Astrocyte of the cerebellum (primary cell): ENCODE measurements at regions of chr7 and their contacts with region 1.

Region 1: DNA sequence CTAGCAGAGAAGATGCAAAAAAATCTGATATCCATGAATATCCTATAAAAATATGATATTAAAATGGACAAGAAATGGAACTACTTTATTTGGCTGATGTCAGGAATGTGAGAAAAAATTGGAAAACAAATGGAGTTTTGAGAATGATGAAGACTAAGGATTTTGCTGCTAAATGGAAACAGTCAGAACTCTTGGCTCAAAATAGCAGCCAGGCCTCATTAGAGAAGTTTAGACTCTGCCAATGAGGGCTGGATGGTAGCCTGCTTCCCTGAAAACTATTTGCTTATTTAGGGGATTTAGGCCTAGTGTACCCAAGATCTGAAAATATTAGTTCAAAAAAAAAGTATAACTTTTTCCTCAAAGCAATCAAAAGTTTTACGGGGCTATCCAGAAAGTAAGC is 458.5 kb downstream of the TFEC start:
- DNase-seq: no peak
- H3K4me3 ChIP-seq: no peak overlapping the region
- CTCF ChIP-seq: no peak

Region 2: GRCh38 chr7:115499956-115500355 is 72.2 kb before region 1 on chr7:
- in situ Hi-C with region 1: loop called (anchors 10 kb)
- DNase-seq: peak; percentile 34
- H3K4me3 ChIP-seq: no peak overlapping the region
- CTCF ChIP-seq: no peak